GM12878 (cell line): ENCODE measurements at regions of chr4 and their contacts with region 1.

Region 1: GRCh38 chr4:25859429-25860148 is 3.2 kb downstream of the SEL1L3 start:
- DNase-seq: no peak
- ATAC-seq: peak; percentile 52
- H3K4me3 ChIP-seq: no peak overlapping the region; the same call in 1 of the 2 replicates
- H3K27ac ChIP-seq: peak overlapping the region; percentile 20; the same call in 1 of the 2 replicates
- H3K4me1 ChIP-seq: peaks cover 22% of the 10 kb centered on the region
- H3K27me3 ChIP-seq: peaks cover 0 to 6% of the 10 kb centered on the region in 2 experiments; a peak in 2 of 4 replicates
- CTCF ChIP-seq: no peak
- EP300 ChIP-seq: no peak
- POLR2A ChIP-seq: 0 out of 2 replicates have a peak, but pooled peaks have one; percentile 6
- RAD21 ChIP-seq: no peak

Region 2: DNA sequence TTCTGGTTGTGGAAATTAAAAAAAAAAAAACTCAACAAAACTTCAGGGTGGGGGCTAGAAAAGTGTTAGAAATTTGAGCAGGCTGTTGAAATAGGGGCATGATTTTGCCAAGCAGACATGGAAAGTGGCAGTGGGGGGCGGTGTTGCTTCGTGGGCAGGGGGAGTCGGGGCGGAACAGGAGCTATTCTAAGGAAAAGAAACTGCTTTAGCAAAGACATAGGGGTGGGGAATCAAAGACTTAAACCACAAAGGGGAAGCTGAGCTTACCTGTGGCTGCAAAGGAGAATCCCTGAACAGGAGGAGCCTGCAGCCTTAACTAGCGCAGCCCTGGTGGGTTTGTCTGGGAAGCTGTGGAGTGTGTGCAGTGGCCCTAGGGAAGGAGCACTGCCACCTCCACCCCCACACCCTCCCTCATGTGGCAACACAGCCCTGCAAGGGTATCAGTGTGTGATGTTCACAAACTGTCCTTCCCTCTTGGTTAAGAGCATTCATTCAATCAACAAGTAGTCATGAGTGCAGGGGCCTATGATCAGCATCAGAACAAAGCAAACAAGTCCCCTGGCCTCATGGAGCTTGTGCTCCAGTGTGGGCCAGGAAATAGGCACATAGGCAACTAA is 17.3 kb before region 1 on chr4:
- CTCF ChIA-PET with region 1: interaction called, 23 read pairs
- POLR2A ChIA-PET with region 1: interaction called, 7 read pairs
- RAD21 ChIA-PET with region 1: interaction called, 25 read pairs
- SMC1A ChIA-PET with region 1: interaction called, 13 read pairs
- in situ Hi-C with region 1: no loop called
- intact Hi-C with region 1: no loop called
- DNase-seq: peak; percentile 21
- ATAC-seq: peak; percentile 80
- H3K4me3 ChIP-seq: no peak overlapping the region
- H3K27ac ChIP-seq: no peak overlapping the region
- H3K4me1 ChIP-seq: peaks cover 31% of the 10 kb centered on the region
- H3K27me3 ChIP-seq: no peaks in the 10 kb centered on the region
- CTCF ChIP-seq: peak; percentile 43 to 53 (median 47); a peak in 5 of 6 replicates
- EP300 ChIP-seq: no peak
- POLR2A ChIP-seq: no peak
- RAD21 ChIP-seq: peak; percentile 85

Region 3: GRCh38 chr4:25879991-25880651 is 20.5 kb after region 1 on chr4:
- CTCF ChIA-PET with region 1: interaction called, 10 read pairs
- POLR2A ChIA-PET with region 1: interaction called, 8 read pairs
- RAD21 ChIA-PET with region 1: interaction called, 10 read pairs
- SMC1A ChIA-PET with region 1: interaction called, 35 read pairs
- in situ Hi-C with region 1: no loop called
- intact Hi-C with region 1: no loop called
- DNase-seq: no peak
- ATAC-seq: peak; percentile 83
- H3K4me3 ChIP-seq: no peak overlapping the region
- H3K27ac ChIP-seq: peak overlapping the region; percentile 53; the same call in 1 of the 2 replicates
- H3K4me1 ChIP-seq: peaks cover 66% of the 10 kb centered on the region
- H3K27me3 ChIP-seq: no peaks in the 10 kb centered on the region
- CTCF ChIP-seq: no peak
- EP300 ChIP-seq: peak; percentile 78 to 90; a peak in 3 of 4 replicates
- POLR2A ChIP-seq: no peak
- RAD21 ChIP-seq: no peak

Region 4: DNA sequence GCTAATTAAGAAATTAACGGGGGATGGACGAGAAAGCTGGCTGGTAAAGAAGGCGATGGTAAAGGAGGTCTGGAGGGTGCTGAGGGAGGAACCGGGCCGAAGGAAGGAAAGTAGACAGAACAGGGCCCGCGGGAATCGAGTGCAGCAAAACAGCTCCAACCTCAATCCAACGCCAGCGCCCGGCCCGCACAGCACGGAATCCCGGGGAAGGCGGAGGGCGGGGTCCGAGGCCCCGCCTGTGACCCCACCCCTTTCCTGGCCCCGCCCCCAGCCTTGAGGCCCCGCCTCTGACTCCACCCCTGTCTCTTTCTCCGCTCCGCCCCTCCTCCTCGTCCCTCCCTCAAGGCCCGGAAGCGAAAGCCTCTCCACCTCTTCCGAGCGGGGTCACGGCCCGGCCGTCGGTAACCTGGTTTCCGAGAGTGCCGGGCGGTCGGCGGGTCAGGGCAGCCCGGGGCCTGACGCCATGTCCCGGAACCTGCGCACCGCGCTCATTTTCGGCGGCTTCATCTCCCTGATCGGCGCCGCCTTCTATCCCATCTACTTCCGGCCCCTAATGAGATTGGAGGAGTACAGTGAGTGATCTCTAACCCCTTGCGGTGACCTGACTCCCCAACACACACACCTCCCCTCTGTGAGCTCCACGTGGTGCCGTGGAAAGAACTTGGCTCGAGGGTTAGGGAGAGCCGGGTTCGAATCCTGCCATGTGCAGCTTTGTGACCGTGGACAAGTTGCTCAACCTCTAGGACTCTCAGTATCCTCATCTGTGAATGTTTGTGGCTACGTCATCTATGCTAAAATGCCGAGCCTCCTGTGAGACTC is 54.5 kb after region 1 on chr4 and contains the start of gene SMIM20:
- CTCF ChIA-PET with region 1: interaction called, 3 read pairs
- POLR2A ChIA-PET with region 1: interaction called, 4 read pairs
- RAD21 ChIA-PET with region 1: interaction called, 15 read pairs
- SMC1A ChIA-PET with region 1: interaction called, 22 read pairs
- in situ Hi-C with region 1: no loop called
- intact Hi-C with region 1: no loop called
- DNase-seq: peak; percentile 56
- ATAC-seq: peak; percentile 97
- H3K4me3 ChIP-seq: peak within 1 kb of the TSS; percentile 78
- H3K27ac ChIP-seq: peak within 1 kb of the TSS; percentile 84
- H3K4me1 ChIP-seq: peaks cover 18% of the 10 kb centered on the region
- H3K27me3 ChIP-seq: no peaks in the 10 kb centered on the region
- CTCF ChIP-seq: no peak
- EP300 ChIP-seq: no peak
- POLR2A ChIP-seq: peak; percentile 94
- RAD21 ChIP-seq: no peak
- polyA plus RNA-seq, gene SMIM20: 32.5 to 32.6 TPM

Region 5: DNA sequence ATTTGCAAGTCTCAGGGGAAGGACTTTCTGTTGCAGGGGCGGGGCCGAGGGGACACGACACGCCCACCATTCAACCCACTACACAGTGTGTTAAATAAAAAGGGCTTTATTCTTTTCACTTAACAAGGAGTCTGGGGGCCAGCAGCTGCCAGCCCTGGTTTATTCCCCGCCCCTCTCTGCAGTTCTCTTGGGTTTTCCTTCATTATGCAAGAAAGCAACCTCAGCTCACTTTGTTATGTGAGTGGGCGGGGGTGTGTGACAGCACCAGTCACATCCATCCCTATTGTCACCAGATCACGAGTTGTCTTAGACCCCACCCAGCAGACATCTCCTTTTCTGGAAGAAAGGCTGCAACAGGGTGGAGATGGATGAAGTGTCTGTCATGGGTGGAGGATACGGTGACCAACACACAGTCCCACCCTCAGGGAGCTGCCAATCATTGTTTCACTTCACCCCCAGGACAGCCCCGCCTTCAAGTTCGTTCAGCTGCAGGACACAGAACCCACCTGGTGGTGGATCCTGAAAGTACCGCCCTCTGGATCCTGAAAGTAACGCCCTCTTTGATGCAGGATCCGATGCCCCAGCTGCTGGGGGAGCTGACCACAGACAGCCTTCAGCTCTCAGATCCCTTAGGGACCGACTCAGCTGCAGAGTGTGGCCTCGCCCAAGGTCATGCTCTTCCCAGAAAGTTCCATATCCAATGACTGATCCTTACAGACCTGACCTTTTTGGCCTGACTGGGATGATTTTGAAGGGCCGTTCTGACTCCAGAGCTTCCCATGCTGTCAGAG is 134.0 kb after region 1 on chr4:
- CTCF ChIA-PET with region 1: interaction called, 16 read pairs
- POLR2A ChIA-PET with region 1: no interaction called
- RAD21 ChIA-PET with region 1: interaction called, 4 read pairs
- SMC1A ChIA-PET with region 1: interaction called, 7 read pairs
- in situ Hi-C with region 1: no loop called
- intact Hi-C with region 1: no loop called
- DNase-seq: no peak
- ATAC-seq: peak; percentile 87
- H3K4me3 ChIP-seq: no peak overlapping the region
- H3K27ac ChIP-seq: no peak overlapping the region
- H3K4me1 ChIP-seq: 0 out of 2 replicates have a peak, but pooled peaks cover 5% of the 10 kb centered on the region
- H3K27me3 ChIP-seq: no peaks in the 10 kb centered on the region
- CTCF ChIP-seq: peak; percentile 28 to 41 (median 35); a peak in 5 of 6 replicates
- EP300 ChIP-seq: no peak
- POLR2A ChIP-seq: no peak
- RAD21 ChIP-seq: peak; percentile 52